Activated CD4-positive, alpha-beta memory T cell treated with anti-CD3 and anti-CD28 coated beads for 36 hours (primary cell): ENCODE measurements at regions of chr2 and their contacts with region 1.

Region 1: GRCh38 chr2:157559061-157559460 is 69.6 kb downstream of the ACVR1C start:
- DNase-seq: no peak
- H3K4me3 Mint-ChIP-seq: no peak overlapping the region
- H3K27ac Mint-ChIP-seq: no peak overlapping the region
- H3K4me1 Mint-ChIP-seq: peaks cover 16% of the 10 kb centered on the region
- H3K27me3 Mint-ChIP-seq: no peaks in the 10 kb centered on the region

Region 2: DNA sequence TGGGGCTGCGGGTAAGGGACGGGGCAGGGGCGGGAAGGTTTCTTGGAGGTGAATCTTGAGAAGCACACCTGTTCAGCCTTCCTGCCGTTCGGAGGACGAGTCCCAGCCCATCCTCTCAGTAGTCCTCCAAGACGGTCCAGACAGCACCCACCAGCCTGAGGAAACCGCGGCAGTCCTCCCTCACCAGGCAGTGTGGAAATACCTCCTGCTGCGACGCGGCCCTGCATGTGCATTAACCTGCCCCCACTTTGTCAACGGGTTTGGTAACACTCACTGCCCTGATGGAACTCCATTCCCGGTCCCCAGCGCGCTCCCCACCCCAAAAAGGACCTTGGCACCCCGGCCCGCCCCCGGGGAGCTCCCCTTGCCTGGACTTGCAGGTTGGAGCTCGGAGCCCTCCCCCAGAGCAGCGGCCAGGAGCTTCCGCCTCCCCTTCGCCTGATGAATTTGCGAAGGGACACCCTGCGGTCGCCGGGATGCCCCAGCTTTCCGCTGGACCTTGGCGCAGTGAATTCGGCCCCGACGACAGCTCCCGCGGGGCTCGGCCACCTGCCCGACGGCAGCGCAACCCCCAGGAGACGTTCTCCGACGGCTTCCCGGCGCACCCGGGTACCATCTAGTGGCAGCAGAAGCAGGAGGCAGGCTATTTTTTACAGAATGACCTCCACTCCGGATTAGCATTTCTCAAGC is 38.1 kb after region 1 on chr2:
- CTCF ChIA-PET with region 1: no interaction called
- POLR2A ChIA-PET with region 1: no interaction called
- intact Hi-C with region 1: loop called (anchors 5 kb)
- DNase-seq: peak; percentile 72
- H3K4me3 Mint-ChIP-seq: peak overlapping the region; percentile 61
- H3K27ac Mint-ChIP-seq: no peak overlapping the region
- H3K4me1 Mint-ChIP-seq: peaks cover 11% of the 10 kb centered on the region
- H3K27me3 Mint-ChIP-seq: peaks cover 4% of the 10 kb centered on the region